A549 (cell line): ENCODE measurements at regions of chr2 and their contacts with region 1.

Region 1: DNA sequence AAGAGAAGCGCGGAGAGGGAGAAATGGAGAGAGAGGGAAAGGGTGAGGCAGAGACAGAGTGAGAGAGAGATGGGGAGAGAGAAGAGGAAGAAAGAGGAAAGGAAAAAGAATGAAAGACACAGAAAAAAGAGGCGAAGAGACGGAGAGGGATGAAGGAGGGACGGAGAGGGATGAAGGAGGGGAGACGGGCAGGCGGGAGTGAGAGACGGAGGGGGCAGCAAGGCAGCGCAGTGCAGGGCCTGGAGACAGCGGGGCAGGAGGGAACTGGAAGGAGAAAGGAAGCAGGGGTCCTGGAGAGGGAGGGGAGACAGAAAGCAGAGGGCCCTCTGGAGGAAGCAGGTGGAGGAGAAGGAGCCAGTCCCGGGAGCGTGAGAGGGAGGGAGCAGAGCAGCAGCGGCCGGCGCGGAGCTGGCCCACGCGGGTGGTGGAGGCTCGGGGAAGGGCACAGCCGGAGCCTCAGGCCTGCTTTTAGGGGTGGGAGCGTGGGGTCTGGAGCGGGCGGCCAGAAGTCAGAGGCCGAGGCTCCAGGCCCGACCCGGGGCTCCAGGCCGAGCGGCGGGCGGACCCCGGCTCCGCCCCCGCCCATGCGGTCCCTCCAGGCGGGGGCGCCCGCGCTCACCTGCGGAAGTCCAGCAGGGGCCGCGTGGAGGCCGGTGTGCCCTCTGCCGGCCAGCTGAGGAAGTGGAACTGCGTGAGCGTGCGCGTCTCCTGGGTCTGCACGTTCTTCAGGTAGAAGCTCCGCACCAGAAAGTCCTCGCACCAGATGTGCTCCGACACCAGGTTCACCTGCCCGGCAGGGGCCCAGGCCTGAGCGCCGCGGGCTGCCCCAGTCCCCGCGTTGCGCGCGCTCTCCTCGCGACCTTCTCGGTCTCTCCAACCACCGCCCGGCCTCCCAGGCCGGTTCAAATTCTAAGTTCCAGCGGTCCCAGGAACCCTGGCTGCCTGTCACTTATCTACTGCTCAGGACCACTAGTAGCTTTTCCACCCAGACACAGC is 14.5 kb downstream of the PTPRN start:
- DNase-seq: peak; percentile 87 to 91
- ATAC-seq: peak; percentile 69 to 89
- H3K4me3 ChIP-seq: peak overlapping the region; percentile 48
- H3K27ac ChIP-seq: peak overlapping the region; percentile 94 to 99
- H3K4me1 ChIP-seq: peaks cover 23% of the 10 kb centered on the region
- CTCF ChIP-seq: peak; percentile 100
- EP300 ChIP-seq: 0 out of 5 replicates have a peak, but pooled peaks of 1 of the 2 experiments have one; percentile 10
- POLR2A ChIP-seq: peak; percentile 56
- RAD21 ChIP-seq: peak; percentile 74 to 93

Region 2: DNA sequence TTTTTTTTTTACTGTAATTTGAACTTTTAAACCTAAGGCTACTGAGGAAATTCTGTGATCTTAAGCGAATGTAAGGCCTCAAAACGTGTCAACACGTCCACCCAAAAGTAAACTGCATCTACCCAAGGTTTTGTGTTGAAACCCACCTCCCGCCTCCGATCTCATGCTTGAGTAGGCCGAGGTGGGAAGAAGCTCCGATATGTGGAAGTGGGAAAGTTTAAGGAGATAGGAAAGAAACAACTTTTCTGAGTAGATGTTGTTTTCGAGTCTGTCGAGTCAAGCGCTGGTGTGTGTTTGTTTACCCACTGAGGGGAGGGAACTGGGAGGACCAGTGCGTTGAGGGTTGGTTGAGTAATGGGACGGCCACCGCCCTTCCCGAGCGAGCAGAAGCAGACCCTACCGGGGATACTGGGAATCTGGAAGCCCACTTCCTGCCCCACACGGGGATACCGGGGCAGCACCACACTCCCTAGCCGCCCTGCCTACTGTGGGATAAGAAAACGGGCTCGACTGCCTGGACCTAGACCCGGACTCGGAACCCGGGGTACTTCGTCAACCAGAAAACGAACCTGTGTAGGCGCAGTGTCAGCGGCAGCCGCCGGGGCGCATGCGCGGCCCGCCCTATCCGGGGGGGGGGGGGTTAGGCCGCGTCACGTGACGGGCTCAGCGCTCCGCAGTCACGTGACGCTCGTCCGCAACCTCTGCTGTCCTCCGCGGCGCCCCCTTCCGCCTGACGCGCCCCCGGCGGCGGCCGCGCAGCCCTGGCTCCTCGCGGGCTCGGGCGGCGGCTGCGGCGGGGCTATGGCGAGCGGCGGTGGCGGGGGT is 116.9 kb before region 1 on chr2 and contains the start of gene RETREG2:
- CTCF ChIA-PET with region 1: interaction called, 177 read pairs
- POLR2A ChIA-PET with region 1: interaction called, 5 read pairs
- DNase-seq: peak; percentile 87 to 94
- ATAC-seq: peak; percentile 83 to 88
- H3K4me3 ChIP-seq: peak within 1 kb of the TSS; percentile 84
- H3K27ac ChIP-seq: peak within 1 kb of the TSS; percentile 83 to 96
- H3K4me1 ChIP-seq: peaks cover 15% of the 10 kb centered on the region
- CTCF ChIP-seq: peak; percentile 54
- EP300 ChIP-seq: no peak
- POLR2A ChIP-seq: peak; percentile 69; the same call in 1 of the 2 replicates
- RAD21 ChIP-seq: no peak
- polyA plus RNA-seq, gene RETREG2: 67.5 and 83.2 TPM in 2 replicates

Region 3: DNA sequence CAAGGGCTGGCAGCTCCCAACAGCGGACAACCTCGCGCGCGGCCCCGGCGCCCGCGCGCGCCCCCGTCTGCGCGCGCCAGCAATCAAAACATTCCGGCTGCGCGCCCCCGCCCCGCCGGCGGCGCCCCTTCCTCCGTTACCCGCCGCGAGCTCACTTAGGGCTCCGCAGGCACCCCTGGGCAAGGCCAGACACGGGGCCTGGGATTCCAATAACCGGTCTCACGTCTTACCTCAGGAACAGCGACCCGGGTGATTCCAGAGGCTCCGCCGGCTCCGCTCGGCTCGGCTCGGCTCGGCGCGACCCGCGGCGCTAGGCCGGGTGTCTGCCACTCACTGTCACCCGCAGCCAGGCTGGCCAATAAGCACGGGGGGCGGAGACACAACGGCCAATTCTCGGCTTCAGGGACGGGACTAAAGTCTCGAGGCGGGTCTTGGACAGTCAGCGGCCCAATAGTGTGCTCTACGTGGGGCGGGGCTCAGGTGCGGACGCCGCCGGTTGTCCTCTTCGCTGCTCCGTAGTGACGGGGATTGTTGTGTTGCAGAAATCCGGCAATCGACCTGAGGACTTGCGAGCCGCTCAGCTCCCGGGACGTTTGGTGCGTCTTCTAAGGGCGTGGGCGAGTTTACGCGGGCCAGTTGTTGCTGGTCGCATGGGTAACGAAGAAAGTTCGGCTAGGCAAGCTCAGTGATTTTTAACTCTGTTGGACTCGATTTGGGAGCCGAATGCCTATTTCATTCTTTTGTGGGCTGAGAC is 65.2 kb before region 1 on chr2 and contains the starts of genes ANKZF1 and ATG9A:
- CTCF ChIA-PET with region 1: interaction called, 86 read pairs
- POLR2A ChIA-PET with region 1: interaction called, 11 read pairs
- DNase-seq: peak; percentile 97 to 99
- ATAC-seq: peak; percentile 96 to 99
- H3K4me3 ChIP-seq: peak within 1 kb of the TSS; percentile 85
- H3K27ac ChIP-seq: peak within 1 kb of the TSS; percentile 82 to 95
- H3K4me1 ChIP-seq: peaks cover 19% of the 10 kb centered on the region
- CTCF ChIP-seq: no peak
- EP300 ChIP-seq: no peak
- POLR2A ChIP-seq: peak; percentile 53
- RAD21 ChIP-seq: no peak; a peak in 1 of 5 replicates
- polyA plus RNA-seq, gene ANKZF1: 29.5 and 30.3 TPM in 2 replicates
- polyA plus RNA-seq, gene ATG9A: 75.2 and 115 TPM in 2 replicates

Region 4: DNA sequence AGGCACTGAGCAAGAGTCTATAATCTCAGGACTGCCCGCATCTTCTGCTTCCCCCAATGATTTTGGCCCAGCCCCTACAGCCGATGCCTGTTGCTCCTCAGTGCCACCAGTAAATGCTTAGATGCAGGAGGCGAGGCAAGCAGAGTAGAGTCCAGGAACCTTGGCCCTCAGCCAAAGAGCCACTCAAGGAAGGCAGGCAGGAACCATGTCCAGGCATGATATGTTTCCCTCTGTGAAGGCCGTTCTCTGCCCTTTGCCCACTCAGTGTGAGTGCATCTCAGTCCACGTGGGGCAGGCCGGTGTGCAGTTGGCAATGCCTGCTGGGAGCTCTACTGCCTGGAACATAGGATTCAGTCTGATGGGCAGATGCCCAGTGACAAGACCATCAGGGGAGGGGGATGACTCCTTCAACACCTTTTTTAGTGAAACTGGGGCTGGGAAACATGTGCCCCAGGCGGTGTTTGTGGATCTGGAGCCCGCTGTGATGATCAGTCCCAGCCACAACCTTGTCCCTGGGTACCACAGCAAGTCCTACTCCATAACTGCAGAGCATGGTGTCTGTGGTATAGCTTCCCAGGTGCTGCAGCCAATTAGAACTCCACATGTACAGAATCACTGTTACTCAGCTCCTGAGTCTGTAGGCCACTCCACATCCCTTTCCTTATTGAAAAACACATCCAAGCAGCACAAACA is 25.1 kb before region 1 on chr2:
- CTCF ChIA-PET with region 1: interaction called, 540 read pairs
- POLR2A ChIA-PET with region 1: interaction called, 8 read pairs
- DNase-seq: no peak
- ATAC-seq: no peak
- H3K4me3 ChIP-seq: no peak overlapping the region
- H3K27ac ChIP-seq: peak overlapping the region; percentile 29 to 96; a peak in 5 of 6 replicates
- H3K4me1 ChIP-seq: peaks cover 46% of the 10 kb centered on the region
- CTCF ChIP-seq: no peak
- EP300 ChIP-seq: no peak
- POLR2A ChIP-seq: no peak
- RAD21 ChIP-seq: no peak

Region 5: DNA sequence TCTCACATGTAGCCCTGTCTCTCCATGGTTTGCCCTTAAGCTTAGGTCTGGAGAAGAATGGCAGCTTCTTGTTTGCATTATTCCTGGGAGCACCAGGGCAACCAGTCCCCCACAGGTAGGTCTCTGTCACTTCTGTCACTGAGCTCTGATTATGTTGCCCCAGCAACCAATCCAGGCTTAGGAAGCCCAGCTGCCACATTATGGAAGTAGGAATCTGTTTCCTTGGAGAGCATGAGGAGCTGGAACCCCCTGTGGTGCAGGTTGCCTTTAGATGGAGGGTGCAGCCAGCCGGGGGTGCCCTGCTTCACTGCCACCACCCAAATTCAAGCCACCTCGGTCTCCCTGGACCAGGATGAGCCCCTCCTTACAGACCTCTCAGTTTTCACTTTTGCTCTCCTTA is 33.1 kb after region 1 on chr2:
- CTCF ChIA-PET with region 1: interaction called, 11 read pairs
- POLR2A ChIA-PET with region 1: no interaction called
- DNase-seq: no peak
- ATAC-seq: no peak
- H3K4me3 ChIP-seq: no peak overlapping the region
- H3K27ac ChIP-seq: no peak overlapping the region
- H3K4me1 ChIP-seq: no peaks in the 10 kb centered on the region
- CTCF ChIP-seq: no peak
- EP300 ChIP-seq: no peak
- POLR2A ChIP-seq: no peak
- RAD21 ChIP-seq: no peak